ENCODE measurements at regions of chr16 and their contacts with region 1.

Region 1: GRCh38 chr16:28317040-28317880 is 24.9 kb downstream of the SBK1 start:
- DNase-seq: peak; percentile 90
- H3K4me3 ChIP-seq: no peak overlapping the region; a peak in 1 of 4 replicates
- H3K27ac ChIP-seq: no peak overlapping the region; a peak in 1 of 4 replicates
- H3K4me1 ChIP-seq: no peaks in the 10 kb centered on the region; a peak in 1 of 4 replicates
- H3K27me3 ChIP-seq: no peaks in the 10 kb centered on the region
- CTCF ChIP-seq: peak; percentile 87
- EP300 ChIP-seq: no peak
- RAD21 ChIP-seq: peak; percentile 75

Region 2: DNA sequence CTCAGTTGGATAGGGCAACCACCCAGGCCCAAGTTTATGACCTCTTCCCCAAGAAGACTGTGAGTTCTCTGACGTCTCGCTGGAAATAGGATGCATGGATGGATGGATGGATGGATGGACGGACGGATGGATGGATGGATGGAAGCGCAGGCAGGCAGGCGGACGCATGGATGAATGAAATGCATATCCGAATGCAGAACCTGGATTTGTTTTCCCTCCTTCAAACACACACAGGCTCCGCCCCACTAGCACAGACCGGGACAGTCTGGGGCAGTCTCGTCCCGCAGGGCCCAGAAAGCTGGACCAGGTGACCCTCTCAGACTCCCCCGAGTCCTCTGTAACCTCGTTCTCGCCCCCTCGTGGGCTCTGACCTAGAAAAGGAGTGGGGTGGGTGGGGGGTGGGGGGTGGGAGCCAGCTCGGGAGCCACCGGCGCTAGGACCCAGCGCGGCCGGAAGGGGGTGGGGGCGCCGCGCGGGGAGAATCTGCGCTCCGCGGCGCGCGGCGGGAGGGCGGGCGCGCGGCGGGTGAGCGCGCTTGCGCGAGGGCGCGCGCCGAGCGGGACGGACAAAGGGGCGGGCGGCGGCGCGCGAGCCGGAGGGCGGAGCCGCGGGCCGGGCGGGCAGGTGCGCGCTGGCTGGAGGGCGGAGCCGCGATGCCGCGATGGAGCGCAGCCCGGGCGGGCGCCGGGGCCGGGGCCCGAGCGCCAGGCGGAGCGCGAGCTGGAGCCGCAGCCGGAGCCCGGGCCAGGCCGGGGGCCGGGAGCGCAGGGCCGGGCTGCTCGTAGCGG is 25.2 kb before region 1 on chr16 and contains the start of gene SBK1:
- CTCF ChIA-PET with region 1: interaction called, 302 read pairs
- POLR2A ChIA-PET with region 1: interaction called, 9 read pairs
- DNase-seq: peak; percentile 98
- H3K4me3 ChIP-seq: peak within 1 kb of the TSS; percentile 66 to 70
- H3K27ac ChIP-seq: peak within 1 kb of the TSS; percentile 15 to 86; a peak in 3 of 4 replicates
- H3K4me1 ChIP-seq: peaks cover 3 to 17% of the 10 kb centered on the region in 2 experiments; a peak in 1 of 4 replicates
- H3K27me3 ChIP-seq: 0 out of 2 replicates have a peak, but pooled peaks cover 10% of the 10 kb centered on the region
- CTCF ChIP-seq: no peak
- EP300 ChIP-seq: no peak
- RAD21 ChIP-seq: no peak
- polyA plus RNA-seq, gene SBK1: 0.36 and 0.55 TPM in 2 replicates

Region 3: GRCh38 chr16:28304214-28304613 is 13.0 kb before region 1 on chr16:
- CTCF ChIA-PET with region 1: interaction called, 11 read pairs
- POLR2A ChIA-PET with region 1: no interaction called
- DNase-seq: no peak
- H3K4me3 ChIP-seq: no peak overlapping the region
- H3K27ac ChIP-seq: no peak overlapping the region
- H3K4me1 ChIP-seq: no peaks in the 10 kb centered on the region
- H3K27me3 ChIP-seq: no peaks in the 10 kb centered on the region
- CTCF ChIP-seq: no peak
- EP300 ChIP-seq: no peak
- RAD21 ChIP-seq: no peak